Vagina (tissue), 2 donors: ENCODE measurements at regions of chr19 and their contacts with region 1.

Region 1: GRCh38 chr19:33302175-33302973 is at the start of gene CEBPA:
- DNase-seq: peak in 1 of 2 donors; percentile 79
- H3K4me3 ChIP-seq: peak within 1 kb of the TSS; percentile 80 to 94
- H3K27ac ChIP-seq: peak within 1 kb of the TSS; percentile 94
- H3K4me1 ChIP-seq: peaks cover 57% of the 10 kb centered on the region
- H3K27me3 ChIP-seq: no peaks in the 10 kb centered on the region
- CTCF ChIP-seq: peak in 1 of 3 experiments; percentile 13
- POLR2A ChIP-seq: peak in 1 of 2 donors; percentile 99
- total RNA-seq, gene CEBPA: 38.3 TPM

Region 2: DNA sequence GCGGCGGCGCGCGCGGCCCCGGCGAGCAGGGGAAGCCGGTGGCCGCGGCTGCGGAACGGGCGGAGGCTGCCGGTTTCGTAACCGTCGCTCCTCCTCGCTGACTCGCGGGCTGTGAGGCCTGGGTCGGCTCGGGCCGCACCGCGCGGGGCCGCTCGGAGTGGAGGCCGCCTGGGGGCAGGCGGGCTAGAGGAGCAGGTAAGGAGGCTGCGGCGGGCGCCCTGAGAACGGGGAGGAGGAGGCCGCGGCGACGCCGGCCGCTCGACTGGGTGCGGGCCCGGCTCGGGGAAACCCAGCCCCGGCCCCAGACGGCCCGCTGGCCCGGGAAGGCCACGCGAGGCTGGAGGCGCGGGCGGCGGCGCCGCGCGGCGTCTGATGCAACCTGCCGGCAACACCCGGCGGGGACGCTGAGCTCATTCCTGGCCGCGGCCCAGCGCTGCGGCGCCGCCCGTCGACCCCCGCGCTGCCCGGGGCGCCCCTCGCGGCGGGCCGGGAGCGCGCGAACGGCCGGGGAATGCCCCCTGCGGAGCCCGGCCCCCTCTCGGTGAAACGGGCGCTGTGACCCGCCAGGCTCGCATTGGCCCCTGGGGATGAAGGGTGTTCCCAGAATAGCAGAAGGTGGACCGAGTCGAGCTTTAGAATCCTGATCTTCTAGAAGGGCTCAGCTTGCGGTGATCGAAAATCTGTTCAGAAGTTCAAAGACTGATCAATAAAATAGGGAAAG is 71.5 kb after region 1 on chr19 and contains the start of gene CEBPG:
- intact Hi-C with region 1: loop called (anchors 5 kb)
- DNase-seq: no peak
- H3K4me3 ChIP-seq: peak within 1 kb of the TSS; percentile 64 to 83
- H3K27ac ChIP-seq: peak within 1 kb of the TSS; percentile 94
- H3K4me1 ChIP-seq: peaks cover 56% of the 10 kb centered on the region
- H3K27me3 ChIP-seq: no peaks in the 10 kb centered on the region
- CTCF ChIP-seq: no peak
- POLR2A ChIP-seq: peak in 1 of 2 donors; percentile 82
- total RNA-seq, gene CEBPG: 20.9 TPM

Region 3: GRCh38 chr19:33388725-33389420 is 86.5 kb after region 1 on chr19:
- intact Hi-C with region 1: loop called (anchors 5 kb)
- DNase-seq: no peak
- H3K4me3 ChIP-seq: no peak overlapping the region
- H3K27ac ChIP-seq: peak overlapping the region; percentile 69
- H3K4me1 ChIP-seq: peaks cover 63% of the 10 kb centered on the region
- H3K27me3 ChIP-seq: no peaks in the 10 kb centered on the region
- CTCF ChIP-seq: no peak
- POLR2A ChIP-seq: no peak